ENCODE measurements at regions of chr14 and their contacts with region 1.

Region 1: DNA sequence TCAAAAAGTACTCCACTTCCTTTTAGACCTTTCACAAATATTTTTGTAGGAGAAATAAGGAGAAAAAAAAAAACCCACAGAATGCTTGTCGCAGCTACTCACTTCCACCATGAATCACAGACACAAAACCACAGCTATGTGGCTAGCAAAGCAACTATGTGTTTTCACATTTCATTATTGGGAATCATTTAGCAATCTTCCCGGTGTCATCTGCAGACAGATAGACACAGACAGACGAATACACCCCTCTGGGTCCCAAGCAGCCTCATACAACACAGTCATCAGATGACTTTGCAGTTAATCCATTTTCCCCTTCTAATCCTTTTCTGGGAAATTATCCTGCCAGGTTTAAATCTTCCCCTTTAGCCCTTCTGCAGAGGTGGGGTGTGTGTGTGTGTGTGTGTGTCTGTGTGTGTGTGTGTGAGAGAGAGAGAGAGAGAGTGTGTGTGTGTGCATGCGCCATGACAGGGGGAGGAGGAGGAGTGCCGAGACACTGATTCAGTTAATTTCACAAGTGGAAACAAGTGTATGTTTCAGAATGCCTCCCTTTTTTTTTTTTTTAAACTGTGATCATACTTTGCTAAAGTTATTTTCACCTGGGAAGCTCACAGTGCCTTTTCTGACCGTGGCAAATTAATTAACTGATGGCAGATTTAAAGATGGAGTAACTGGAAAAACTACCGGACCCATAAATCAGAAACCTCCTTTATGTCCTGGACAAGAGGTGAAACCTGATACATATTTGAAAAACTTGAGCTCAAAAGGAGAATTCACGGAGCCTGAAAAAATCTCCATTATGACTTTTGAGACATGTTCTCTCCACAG is 39.9 kb downstream of the LTBP2 start:
- DNase-seq: peak; percentile 87 to 100
- H3K4me3 ChIP-seq: peak overlapping the region; percentile 52
- H3K27ac ChIP-seq: peak overlapping the region; percentile 99
- H3K4me1 ChIP-seq: peaks cover 92% of the 10 kb centered on the region
- H3K27me3 ChIP-seq: no peaks in the 10 kb centered on the region
- CTCF ChIP-seq: no peak

Region 2: DNA sequence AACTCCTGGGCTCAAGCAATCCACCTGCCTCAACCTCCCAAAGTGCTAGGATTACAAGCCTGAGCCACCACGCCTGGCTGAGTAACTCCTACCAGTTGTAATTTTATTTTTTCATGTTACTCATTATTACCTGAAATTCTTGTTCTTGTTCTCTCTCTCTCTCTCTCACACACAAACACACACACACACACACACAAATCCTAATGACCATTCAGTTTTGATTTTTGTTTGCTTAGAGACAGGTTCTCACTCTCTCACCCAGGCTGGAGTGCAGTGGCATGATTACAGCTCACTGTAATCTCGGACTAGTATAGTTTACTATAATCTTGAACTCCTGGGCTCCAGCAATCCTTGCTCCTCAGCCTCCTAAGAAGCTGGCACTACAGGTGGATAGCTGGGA is 897.1 kb before region 1 on chr14:
- CTCF ChIA-PET with region 1: no interaction called
- POLR2A ChIA-PET with region 1: no interaction called
- intact Hi-C with region 1: no loop called
- DNase-seq: no peak
- H3K4me3 ChIP-seq: no peak overlapping the region
- H3K27ac ChIP-seq: peak overlapping the region; percentile 45
- H3K4me1 ChIP-seq: no peaks in the 10 kb centered on the region; the same call in 1 of the 2 replicates
- H3K27me3 ChIP-seq: no peaks in the 10 kb centered on the region
- CTCF ChIP-seq: no peak

Region 3: DNA sequence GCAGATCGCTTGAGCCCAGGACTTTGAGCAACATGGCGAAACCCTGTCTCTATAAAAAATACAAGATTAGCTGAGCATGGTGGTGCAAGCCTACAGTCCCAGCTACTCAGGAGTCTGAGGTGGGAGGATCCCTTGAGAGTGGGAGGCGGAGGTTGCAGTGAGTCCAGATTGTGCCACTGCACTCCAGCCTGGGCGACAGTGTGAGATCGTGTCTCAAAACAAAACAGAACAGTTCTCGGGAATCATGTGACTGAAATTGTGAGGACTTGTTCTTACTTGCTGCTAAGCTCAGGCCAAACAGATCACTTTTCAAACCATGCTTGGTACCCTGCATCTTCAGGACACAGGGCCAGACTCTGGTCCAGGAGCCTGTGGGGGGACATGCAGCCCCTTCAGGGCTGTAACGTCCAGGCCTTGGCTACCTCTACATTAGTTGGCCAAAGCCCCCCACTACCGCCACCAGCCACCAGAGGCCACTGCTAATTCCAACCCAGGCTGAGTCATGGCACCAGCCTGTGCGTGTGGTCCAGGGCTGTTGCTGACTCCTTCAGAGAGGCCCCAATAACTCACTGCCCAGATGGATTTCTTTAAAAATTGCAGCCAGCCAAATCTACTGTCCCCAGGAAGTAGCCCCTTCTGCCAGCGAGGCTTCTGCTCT is 112.7 kb before region 1 on chr14:
- CTCF ChIA-PET with region 1: no interaction called
- POLR2A ChIA-PET with region 1: interaction called, 10 read pairs
- intact Hi-C with region 1: no loop called
- DNase-seq: peak in 1 of 2 experiments; percentile 65
- H3K4me3 ChIP-seq: no peak overlapping the region
- H3K27ac ChIP-seq: no peak overlapping the region
- H3K4me1 ChIP-seq: peaks cover 7% of the 10 kb centered on the region
- H3K27me3 ChIP-seq: no peaks in the 10 kb centered on the region
- CTCF ChIP-seq: peak; percentile 72

Region 4: GRCh38 chr14:74549588-74549987 is 22.5 kb before region 1 on chr14:
- CTCF ChIA-PET with region 1: interaction called, 10 read pairs
- POLR2A ChIA-PET with region 1: no interaction called
- intact Hi-C with region 1: loop called (anchors 1 kb)
- DNase-seq: peak; percentile 74 to 85
- H3K4me3 ChIP-seq: no peak overlapping the region
- H3K27ac ChIP-seq: peak overlapping the region; percentile 14
- H3K4me1 ChIP-seq: peaks cover 13% of the 10 kb centered on the region
- H3K27me3 ChIP-seq: no peaks in the 10 kb centered on the region
- CTCF ChIP-seq: peak; percentile 88

Region 5: GRCh38 chr14:74655599-74656389 is 83.7 kb after region 1 on chr14:
- CTCF ChIA-PET with region 1: no interaction called
- POLR2A ChIA-PET with region 1: no interaction called
- intact Hi-C with region 1: loop called (anchors 5 kb)
- DNase-seq: peak; percentile 58 to 96
- H3K4me3 ChIP-seq: no peak overlapping the region
- H3K27ac ChIP-seq: peak overlapping the region; percentile 78
- H3K4me1 ChIP-seq: peaks cover 59% of the 10 kb centered on the region
- H3K27me3 ChIP-seq: no peaks in the 10 kb centered on the region
- CTCF ChIP-seq: no peak; the same call in 1 of the 2 replicates

Region 6: DNA sequence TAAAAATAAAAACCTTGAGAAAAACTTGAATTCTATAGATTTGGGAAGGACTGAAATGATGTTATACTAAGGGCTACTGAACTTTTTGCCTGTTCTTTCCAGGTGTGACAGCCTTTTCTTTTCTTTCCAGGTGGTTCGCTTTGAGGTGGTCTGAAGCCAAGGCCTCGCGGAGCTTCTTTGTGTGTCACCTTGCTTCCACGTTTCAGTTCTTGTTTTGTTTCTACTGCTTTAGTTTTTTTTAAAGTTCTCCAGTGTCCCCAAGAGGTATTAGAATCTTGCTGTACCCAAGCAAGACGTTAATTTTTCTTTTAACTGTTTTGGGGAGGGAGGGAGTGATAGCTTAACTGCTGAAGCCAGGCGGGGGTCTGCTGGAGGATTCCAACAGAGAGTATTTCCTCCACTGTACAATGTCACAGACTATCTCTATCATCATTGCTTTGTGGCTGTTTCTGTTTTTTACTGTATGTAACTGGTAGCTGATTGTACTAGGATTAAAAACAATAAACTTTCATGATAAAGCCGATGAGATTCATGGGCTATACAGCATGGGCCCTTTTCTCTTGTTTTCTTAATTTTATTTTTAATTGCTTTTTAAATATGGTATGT is 263.6 kb after region 1 on chr14:
- CTCF ChIA-PET with region 1: no interaction called
- POLR2A ChIA-PET with region 1: interaction called, 19 read pairs
- intact Hi-C with region 1: no loop called
- DNase-seq: no peak
- H3K4me3 ChIP-seq: no peak overlapping the region
- H3K27ac ChIP-seq: no peak overlapping the region
- H3K4me1 ChIP-seq: no peaks in the 10 kb centered on the region
- H3K27me3 ChIP-seq: no peaks in the 10 kb centered on the region
- CTCF ChIP-seq: no peak

Region 7: DNA sequence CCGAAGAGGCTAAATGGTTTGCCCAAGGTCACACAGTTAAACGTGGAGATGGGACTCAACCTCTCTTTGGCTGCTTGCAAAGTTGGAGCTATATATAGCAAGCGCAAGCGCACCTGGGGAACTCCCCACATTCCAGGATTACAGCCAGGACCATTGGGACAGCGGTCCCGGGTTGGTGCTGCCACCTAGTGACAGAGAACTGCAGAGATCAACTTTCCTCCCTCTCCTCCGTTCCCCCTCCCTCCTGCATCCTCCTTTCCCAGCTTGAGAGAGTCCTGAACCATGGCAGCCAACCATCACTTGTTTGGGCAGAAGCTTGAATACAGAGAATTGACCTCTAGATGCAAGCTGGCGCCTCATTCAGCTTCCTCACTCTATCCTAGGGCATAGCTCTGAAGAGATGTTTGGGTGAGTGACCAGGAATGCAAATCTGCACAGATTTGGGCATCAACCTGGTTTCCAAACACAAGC is 988.9 kb after region 1 on chr14:
- CTCF ChIA-PET with region 1: no interaction called
- POLR2A ChIA-PET with region 1: no interaction called
- intact Hi-C with region 1: loop called (anchors 10 kb)
- DNase-seq: peak; percentile 90 to 98
- H3K4me3 ChIP-seq: no peak overlapping the region
- H3K27ac ChIP-seq: peak overlapping the region; percentile 89
- H3K4me1 ChIP-seq: peaks cover 57% of the 10 kb centered on the region
- H3K27me3 ChIP-seq: no peaks in the 10 kb centered on the region
- CTCF ChIP-seq: peak; percentile 99

Measured in PC-9 (cell line).